ENCODE measurements at regions of chr5 and their contacts with region 1.

Region 1: DNA sequence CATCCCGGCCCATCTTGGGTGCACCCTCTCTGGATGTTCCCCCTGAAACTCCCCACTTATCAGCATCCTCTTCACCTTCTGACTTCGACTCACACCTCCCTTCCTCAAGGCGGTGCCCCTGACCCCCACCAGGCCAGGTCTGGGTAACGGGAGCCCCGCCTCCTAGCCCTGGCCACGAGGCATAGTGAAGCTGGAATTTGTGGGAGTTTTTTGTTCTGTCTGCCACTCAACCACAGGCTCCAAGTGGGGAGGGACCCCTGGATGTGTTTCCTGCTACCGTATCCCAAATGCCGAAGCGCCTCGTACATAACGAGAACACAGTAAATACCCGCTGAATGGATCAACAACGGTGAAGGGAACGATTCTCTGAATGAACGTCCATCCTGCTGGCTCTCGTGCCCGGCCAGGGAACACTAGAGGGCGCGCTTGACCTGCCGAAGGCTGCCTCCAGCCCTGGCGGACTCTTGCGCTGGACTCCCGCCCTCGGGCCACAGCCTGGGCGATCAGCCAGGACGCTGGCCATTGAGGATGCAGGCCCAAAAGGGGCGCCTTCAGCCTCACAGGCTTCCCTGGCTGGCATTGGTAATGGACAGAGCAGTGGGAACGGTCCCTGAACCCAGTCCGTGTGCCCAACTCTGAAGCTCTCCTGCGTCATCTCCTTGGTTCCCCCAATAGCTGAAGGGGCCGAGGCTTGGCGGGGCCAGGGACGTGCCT is 47.3 kb upstream of the PHYKPL start:
- DNase-seq: peak; percentile 79
- ATAC-seq: peak; percentile 82
- H3K4me3 Mint-ChIP-seq: no peak overlapping the region
- H3K27ac Mint-ChIP-seq: peak overlapping the region; percentile 81
- H3K4me1 Mint-ChIP-seq: peaks cover 19% of the 10 kb centered on the region
- H3K27me3 Mint-ChIP-seq: peaks cover 3% of the 10 kb centered on the region

Region 2: DNA sequence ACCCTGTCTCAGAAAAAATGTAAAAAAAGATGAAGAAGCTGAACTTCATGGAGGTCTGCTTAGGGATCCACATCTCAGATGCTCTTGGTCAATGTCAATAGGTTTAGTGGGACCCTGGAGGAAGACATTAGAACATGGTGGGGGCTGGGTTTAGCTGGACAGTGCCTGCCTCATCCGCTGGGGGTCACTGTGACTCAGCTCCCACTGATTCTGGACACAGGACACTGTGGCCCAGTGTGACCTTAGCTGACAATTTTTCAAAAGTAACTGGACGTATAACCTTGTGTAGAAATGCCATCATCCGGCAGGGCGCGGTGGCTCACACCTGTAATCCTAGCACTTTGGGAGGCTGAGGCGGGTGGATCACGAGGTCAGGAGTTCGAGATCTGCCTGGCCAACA is 82.9 kb before region 1 on chr5:
- CTCF ChIA-PET with region 1: no interaction called
- POLR2A ChIA-PET with region 1: no interaction called
- DNase-seq: no peak
- ATAC-seq: no peak
- H3K4me3 Mint-ChIP-seq: no peak overlapping the region
- H3K27ac Mint-ChIP-seq: no peak overlapping the region
- H3K4me1 Mint-ChIP-seq: peaks cover 24% of the 10 kb centered on the region
- H3K27me3 Mint-ChIP-seq: peaks cover 10% of the 10 kb centered on the region

Region 3: GRCh38 chr5:178551059-178551458 is 271.2 kb after region 1 on chr5:
- CTCF ChIA-PET with region 1: interaction called, 12 read pairs
- POLR2A ChIA-PET with region 1: no interaction called
- DNase-seq: no peak
- ATAC-seq: no peak
- H3K4me3 Mint-ChIP-seq: no peak overlapping the region
- H3K27ac Mint-ChIP-seq: no peak overlapping the region
- H3K4me1 Mint-ChIP-seq: no peaks in the 10 kb centered on the region
- H3K27me3 Mint-ChIP-seq: peaks cover 2% of the 10 kb centered on the region

Measured in activated CD8-positive, alpha-beta T cell treated with anti-CD3 and anti-CD28 coated beads, Interleukin-2, amount 10 ng/mL, durations not matched to agents 7 days and 5 days (primary cell).